ENCODE measurements at regions of chr19 and their contacts with region 1.

Region 1: DNA sequence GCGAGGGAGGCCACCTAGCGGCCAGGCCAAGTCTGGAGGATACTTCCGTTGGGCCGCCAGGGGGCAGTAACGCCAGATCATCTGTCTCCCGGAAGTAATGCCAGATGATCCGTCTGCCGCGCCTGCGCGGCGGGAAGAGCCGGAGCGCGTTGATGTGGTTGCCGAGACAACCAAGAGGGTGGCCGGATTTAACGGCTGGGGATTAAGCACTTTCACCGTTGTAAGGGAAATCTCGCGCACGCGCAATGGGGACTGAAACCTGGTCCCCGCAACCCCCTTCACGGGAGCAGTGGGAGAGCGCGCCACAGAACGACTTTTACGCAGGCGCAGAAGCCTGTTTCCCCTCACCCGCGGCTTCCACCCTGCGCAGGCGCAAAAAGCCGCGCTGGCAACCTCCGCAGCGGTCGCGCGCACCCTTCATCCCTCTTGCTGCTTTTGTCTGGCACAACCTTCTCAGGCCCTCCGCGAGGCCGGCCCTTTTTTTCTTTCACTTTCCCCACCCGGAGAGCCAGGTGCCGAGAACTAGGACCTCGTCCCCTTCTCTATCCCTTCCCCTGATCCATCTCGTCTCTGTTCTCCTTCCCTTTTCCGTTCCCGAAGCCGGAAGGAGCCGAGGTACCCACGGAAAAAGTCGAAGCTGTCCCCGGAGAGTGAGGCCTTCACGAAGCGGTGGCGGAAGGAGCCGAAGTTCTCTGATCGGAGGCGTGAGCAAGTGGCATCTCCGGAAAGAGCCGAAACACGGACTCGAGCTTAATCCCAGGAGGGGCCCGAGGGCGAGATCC is 886 bp upstream of the U2AF2 start:
- DNase-seq: peak; percentile 100
- ATAC-seq: peak; percentile 94
- H3K4me3 ChIP-seq: peak overlapping the region; percentile 39 to 57
- H3K27ac ChIP-seq: peak overlapping the region in 1 of 2 donors; percentile 97
- H3K4me1 ChIP-seq: peaks cover 0 to 6% of the 10 kb centered on the region in 2 donors
- H3K27me3 ChIP-seq: no peaks in the 10 kb centered on the region

Region 2: DNA sequence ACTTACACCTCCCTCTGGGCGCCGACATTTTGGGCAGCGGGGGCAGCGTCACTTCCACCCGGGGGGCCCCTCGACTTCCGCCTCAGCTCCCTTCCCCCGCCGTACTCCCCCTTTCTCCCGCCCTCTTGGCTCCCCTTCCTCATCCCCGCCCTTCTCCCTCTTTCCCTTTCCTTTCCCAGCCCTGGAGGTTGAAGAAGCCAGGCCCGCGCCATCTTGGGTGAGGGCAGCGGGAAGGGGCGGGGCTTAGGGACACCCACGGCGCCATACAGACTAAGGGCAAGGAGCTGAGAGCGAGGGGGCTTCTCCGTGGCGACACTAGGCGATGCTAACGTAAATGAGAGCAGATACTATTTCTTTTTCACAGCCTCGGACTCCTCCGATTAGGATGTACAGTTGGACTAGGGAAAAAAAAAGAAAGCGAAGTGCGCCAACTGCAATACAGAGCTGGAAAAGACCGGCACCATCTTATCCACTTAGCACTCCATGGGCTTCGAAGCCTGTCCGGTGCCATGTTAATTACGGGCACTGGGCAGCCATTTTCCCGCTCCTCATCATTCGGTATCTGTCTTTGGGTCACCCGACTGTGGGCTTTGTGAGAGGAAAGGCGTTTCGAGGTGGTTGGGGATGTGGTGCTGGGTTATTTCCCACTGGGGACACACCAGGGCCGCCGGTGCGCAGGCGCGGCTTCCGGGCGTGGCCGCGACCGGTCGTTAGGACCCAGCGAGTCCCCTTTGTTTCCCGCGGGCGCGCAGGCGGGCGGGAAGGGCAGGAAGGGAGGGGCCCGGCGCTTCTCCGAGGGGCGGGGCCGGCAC is 54.3 kb before region 1 on chr19 and contains the start of gene FIZ1:
- intact Hi-C with region 1: no loop called
- DNase-seq: peak; percentile 99
- ATAC-seq: peak; percentile 97
- H3K4me3 ChIP-seq: peak within 1 kb of the TSS; percentile 72 to 82
- H3K27ac ChIP-seq: peak within 1 kb of the TSS; percentile 83 to 89
- H3K4me1 ChIP-seq: no peaks in the 10 kb centered on the region
- H3K27me3 ChIP-seq: no peaks in the 10 kb centered on the region
- total RNA-seq, gene FIZ1: 12.7 to 13.2 TPM

Region 3: DNA sequence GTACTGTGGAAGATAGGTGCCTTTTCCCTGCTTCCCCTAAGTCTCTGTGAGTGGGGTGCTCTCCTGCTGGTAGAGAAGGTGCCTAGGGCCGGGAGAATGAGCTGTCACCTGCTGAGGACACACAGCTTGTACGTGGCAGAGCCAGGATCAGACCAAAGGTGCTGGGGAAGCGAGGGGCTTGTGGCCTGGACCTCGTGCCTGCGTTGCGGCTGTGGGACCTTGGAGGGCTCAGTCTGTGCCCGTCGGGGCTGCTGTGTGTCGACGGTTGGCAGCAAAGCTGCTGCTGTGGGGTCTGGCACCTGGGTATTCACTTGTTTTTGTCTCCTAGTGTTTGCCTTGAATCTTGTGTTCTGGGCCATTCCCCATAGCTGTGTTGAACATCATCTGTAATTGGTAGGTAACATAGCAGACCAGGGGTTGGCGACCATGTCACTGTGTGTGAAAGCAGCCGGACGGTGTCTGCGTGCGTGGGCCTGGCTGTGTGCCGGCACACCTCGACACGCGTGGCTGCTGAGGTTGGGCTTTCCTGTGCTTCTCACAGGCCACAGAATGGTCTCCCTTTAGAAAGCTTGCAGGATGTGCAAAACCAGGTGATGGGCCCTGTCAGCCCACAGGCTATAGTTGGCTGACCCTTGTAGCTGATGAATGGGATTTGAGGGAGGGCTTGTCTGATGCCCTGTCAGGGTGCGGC is 10.0 kb after region 1 on chr19:
- intact Hi-C with region 1: no loop called
- DNase-seq: no peak
- ATAC-seq: no peak
- H3K4me3 ChIP-seq: no peak overlapping the region
- H3K27ac ChIP-seq: no peak overlapping the region
- H3K4me1 ChIP-seq: no peaks in the 10 kb centered on the region
- H3K27me3 ChIP-seq: no peaks in the 10 kb centered on the region

Region 4: DNA sequence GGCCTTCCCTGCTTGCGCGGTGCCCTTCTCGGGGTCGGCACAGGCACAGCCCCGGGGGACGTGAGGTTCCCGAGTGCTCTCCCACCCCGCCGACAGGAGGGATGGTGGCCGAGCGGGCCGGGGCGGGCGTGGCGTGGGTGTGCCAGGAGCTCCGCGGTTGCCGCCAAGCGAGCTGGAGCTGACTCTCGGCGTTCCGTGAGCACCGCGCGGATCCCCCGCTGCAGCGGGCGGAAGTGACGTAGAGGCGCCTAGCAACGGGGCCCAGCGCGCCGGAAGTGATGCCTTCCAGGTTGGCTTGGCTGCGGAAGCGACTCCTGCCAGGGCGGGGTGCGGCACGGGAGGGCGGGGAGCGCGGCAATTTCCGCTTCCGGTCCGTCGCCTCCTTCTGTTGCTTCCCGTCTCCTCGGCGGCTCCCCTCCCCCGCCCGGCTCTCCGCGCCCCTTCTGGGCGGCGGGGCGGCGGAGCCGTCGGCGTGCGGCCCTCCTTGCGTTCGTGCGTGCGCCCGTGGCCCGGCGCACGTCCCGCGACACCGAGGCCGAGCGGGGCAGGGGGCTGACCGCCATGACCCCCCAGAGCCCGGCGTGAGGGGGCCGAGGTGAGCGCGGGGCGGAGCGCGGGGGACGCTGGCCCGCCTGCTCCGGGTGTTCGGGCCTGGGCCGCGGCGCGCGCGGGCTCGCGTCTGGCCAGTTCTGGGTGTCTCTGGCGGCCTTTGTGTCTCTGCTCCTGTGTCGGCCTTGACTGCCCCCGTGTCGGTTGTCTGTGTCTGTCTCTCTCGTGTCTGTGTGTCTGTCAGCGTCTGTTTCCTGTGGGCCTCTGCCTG is 21.1 kb after region 1 on chr19 and contains the start of gene EPN1:
- intact Hi-C with region 1: loop called in 1 of 2 experiments (anchors 1 kb)
- DNase-seq: peak; percentile 98 to 99
- ATAC-seq: peak; percentile 95
- H3K4me3 ChIP-seq: peak within 1 kb of the TSS; percentile 82 to 94
- H3K27ac ChIP-seq: peak within 1 kb of the TSS in 1 of 2 donors; percentile 79
- H3K4me1 ChIP-seq: no peaks in the 10 kb centered on the region
- H3K27me3 ChIP-seq: no peaks in the 10 kb centered on the region
- total RNA-seq, gene EPN1: 74.7 to 87.8 TPM

Region 5: DNA sequence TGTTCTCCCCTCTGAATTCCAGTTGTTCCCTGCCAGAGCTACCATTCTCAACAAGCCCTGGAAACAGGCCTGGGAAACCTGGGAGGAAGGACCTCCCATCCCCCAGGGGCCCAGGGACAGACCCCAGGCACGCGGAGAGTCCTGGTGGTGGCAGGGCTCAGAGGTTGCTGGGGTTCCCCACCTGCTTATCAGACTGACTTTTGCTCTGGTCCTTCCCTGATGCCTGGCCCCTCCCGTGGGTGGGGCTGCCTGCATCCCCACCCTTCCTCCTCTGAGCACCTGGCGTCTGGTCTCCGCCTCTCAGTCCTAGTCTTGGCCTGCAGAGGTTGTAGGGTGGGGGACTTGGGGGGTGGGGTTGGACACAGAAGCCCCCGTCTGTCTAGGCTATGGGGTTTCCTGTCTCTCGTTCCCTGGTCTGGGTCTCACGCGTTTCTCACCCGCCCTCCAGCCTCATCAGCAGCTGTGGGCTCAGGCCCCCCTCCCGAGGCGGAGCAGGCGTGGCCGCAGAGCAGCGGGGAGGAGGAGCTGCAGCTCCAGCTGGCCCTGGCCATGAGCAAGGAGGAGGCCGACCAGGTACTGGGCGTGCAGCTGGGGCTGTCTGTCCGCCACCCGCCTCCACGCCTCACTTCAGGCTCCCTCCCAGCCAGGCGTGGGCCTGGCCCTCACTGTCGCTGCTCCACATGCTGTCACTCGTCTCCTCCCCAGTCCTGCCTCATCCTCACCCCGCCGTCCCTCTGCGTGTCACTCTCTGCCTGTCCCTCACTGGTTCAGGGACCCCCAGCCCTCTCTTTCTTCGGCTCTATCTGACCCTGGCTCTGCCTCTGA is 34.7 kb after region 1 on chr19:
- intact Hi-C with region 1: no loop called
- DNase-seq: peak; percentile 33 to 61
- ATAC-seq: no peak
- H3K4me3 ChIP-seq: no peak overlapping the region
- H3K27ac ChIP-seq: no peak overlapping the region
- H3K4me1 ChIP-seq: no peaks in the 10 kb centered on the region
- H3K27me3 ChIP-seq: no peaks in the 10 kb centered on the region

Region 6: GRCh38 chr19:55898911-55899310 is 245.0 kb after region 1 on chr19:
- intact Hi-C with region 1: no loop called
- DNase-seq: no peak
- ATAC-seq: no peak
- H3K4me3 ChIP-seq: no peak overlapping the region
- H3K27ac ChIP-seq: no peak overlapping the region
- H3K4me1 ChIP-seq: no peaks in the 10 kb centered on the region
- H3K27me3 ChIP-seq: no peaks in the 10 kb centered on the region

Measured in aorta (tissue), 5 donors.